ENCODE measurements at regions of chr3 and their contacts with region 1.

Region 1: GRCh38 chr3:16482770-16483531 is 30.5 kb downstream of the RFTN1 start:
- DNase-seq: peak; percentile 82
- H3K4me3 ChIP-seq: peak overlapping the region; percentile 50
- H3K27ac ChIP-seq: peak overlapping the region; percentile 77
- H3K4me1 ChIP-seq: peaks cover 74% of the 10 kb centered on the region
- CTCF ChIP-seq: peak; percentile 37; the same call in 1 of the 2 replicates

Region 2: DNA sequence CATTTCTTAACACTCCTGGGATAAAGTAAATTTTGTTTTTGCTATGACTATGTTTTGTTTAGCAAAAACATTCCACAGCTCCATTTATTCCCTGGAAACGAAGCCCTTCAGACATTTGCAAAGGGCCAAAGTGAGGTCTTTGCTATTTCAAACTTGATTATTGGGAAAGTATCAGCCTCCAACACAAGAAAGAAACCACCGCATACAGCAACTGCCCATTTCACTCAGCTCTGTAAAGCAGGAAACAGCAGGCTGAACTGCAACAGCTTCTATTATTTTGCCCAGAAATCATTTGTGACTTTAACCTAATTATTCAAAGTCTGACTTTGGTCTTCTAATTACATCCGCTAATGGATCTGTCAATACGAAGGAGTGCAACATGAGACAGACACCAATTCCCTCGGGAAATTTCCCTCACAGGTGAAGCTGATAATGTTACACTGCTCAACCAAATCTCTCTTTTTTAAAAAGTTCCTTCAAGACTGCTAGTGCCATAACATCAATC is 41.5 kb before region 1 on chr3:
- CTCF ChIA-PET with region 1: interaction called, 3 read pairs
- POLR2A ChIA-PET with region 1: interaction called, 11 read pairs
- intact Hi-C with region 1: no loop called
- DNase-seq: peak; percentile 59
- H3K4me3 ChIP-seq: peak overlapping the region; percentile 45
- H3K27ac ChIP-seq: peak overlapping the region; percentile 93
- H3K4me1 ChIP-seq: peaks cover 100% of the 10 kb centered on the region
- CTCF ChIP-seq: no peak

Region 3: DNA sequence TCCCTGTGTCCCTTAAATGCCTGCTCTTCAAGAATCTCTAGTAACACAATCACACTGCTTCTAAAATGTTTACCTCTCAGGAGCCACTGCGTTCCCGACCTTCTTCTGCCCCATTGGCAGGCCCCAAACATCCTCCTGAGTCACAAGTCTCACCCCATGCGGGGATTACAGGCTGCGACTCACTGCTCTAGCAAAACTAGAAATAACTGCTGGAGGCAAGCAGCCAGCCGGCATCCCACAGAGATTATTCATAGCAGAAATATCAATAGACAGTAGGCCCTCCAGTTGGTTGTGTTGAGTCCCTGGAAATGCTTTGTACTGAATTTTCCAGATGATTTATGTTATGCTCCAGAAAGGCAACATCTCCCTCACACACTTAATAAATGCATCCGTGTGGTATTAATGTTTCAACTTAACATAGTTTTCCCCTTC is 34.3 kb before region 1 on chr3:
- CTCF ChIA-PET with region 1: interaction called, 9 read pairs
- POLR2A ChIA-PET with region 1: interaction called, 58 read pairs
- intact Hi-C with region 1: no loop called
- DNase-seq: peak; percentile 64
- H3K4me3 ChIP-seq: peak overlapping the region; percentile 7
- H3K27ac ChIP-seq: peak overlapping the region; percentile 93
- H3K4me1 ChIP-seq: peaks cover 100% of the 10 kb centered on the region
- CTCF ChIP-seq: no peak

Region 4: GRCh38 chr3:16467393-16467792 is 15.6 kb before region 1 on chr3:
- CTCF ChIA-PET with region 1: interaction called, 4 read pairs
- POLR2A ChIA-PET with region 1: interaction called, 19 read pairs
- intact Hi-C with region 1: no loop called
- DNase-seq: no peak
- H3K4me3 ChIP-seq: no peak overlapping the region
- H3K27ac ChIP-seq: no peak overlapping the region
- H3K4me1 ChIP-seq: peaks cover 55% of the 10 kb centered on the region
- CTCF ChIP-seq: no peak

Region 5: GRCh38 chr3:16496408-16497222 is 13.7 kb after region 1 on chr3:
- CTCF ChIA-PET with region 1: interaction called, 4 read pairs
- POLR2A ChIA-PET with region 1: interaction called, 69 read pairs
- intact Hi-C with region 1: no loop called
- DNase-seq: no peak
- H3K4me3 ChIP-seq: peak overlapping the region; percentile 2
- H3K27ac ChIP-seq: no peak overlapping the region
- H3K4me1 ChIP-seq: peaks cover 69% of the 10 kb centered on the region
- CTCF ChIP-seq: no peak

Region 6: DNA sequence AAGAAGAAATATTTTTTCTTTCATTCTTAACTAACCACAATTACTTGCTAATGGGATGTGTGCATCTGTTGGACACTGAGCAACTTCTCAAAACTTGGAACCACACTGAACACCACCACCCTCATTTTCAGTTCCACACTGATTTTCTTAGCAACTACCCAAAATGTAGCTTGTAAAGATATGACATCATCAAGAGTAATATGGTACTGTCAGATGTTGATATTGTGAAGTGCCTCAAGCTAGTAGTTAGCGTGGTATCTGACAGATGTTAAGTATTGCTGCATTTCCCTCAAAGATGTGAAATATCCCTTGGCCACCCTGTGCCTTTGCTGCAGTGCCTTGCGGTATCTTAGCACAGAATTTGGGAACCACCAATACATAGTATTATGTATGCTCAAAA is 21.3 kb after region 1 on chr3:
- CTCF ChIA-PET with region 1: interaction called, 4 read pairs
- POLR2A ChIA-PET with region 1: interaction called, 69 read pairs
- intact Hi-C with region 1: no loop called
- DNase-seq: peak; percentile 40
- H3K4me3 ChIP-seq: no peak overlapping the region
- H3K27ac ChIP-seq: peak overlapping the region; percentile 18
- H3K4me1 ChIP-seq: peaks cover 95% of the 10 kb centered on the region
- CTCF ChIP-seq: no peak

Region 7: GRCh38 chr3:16511681-16512434 is 28.9 kb after region 1 on chr3:
- CTCF ChIA-PET with region 1: no interaction called
- POLR2A ChIA-PET with region 1: interaction called, 47 read pairs
- intact Hi-C with region 1: loop called (anchors 1 kb)
- DNase-seq: peak; percentile 92
- H3K4me3 ChIP-seq: peak overlapping the region; percentile 92
- H3K27ac ChIP-seq: peak overlapping the region; percentile 93
- H3K4me1 ChIP-seq: peaks cover 74% of the 10 kb centered on the region
- CTCF ChIP-seq: no peak

Region 8: DNA sequence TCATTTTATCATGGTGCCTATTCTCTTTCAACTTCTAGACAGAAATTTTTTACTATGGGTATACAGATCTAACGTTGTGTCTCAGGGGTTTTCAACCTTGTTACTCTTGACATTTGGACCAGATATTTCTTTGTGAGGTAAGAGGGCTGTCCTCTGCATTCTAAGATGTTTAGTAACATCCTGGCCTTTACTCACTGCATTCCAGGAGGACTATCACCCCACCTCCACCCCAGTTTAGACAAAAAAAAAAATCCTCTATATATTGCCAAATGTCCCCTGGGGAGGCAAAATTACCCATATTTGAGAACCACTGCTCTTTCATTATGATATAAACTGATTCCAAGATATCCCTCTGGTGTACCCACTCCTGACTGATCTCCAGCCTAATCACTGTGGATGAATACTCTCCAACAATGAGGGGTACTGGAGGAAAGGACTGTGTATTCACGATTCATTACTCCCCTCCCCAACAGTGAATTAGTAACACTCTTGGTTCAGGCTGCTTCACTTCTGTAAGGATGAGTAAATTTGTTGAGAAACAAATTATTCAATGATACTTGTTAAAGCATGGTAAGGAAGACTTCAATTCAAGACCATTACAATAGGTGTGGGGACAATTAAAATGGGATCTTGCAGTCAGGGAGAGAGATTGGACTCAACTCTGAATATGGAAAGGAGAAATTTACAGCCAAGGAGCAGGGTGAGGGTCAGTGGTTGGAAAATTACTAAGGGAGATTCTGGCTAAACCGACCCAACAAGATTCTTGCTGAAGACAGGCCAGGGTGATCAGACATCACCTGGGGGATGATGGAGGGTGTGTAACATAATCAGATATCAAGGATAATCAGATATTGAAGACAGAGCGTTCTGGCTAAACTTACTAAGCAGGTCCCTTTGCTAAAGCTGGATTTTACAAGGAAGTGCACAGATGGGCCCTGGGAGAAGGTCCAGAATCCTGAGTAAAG is 246.1 kb after region 1 on chr3:
- CTCF ChIA-PET with region 1: no interaction called
- POLR2A ChIA-PET with region 1: no interaction called
- intact Hi-C with region 1: no loop called
- DNase-seq: no peak
- H3K4me3 ChIP-seq: no peak overlapping the region
- H3K27ac ChIP-seq: no peak overlapping the region
- H3K4me1 ChIP-seq: no peaks in the 10 kb centered on the region
- CTCF ChIP-seq: no peak

Measured in OCI-LY7 (cell line).